Activated B cell treated with CpG ODN at 0.5 μM for 24 hours (primary cell): ENCODE measurements at regions of chr5 and their contacts with region 1.

Region 1: GRCh38 chr5:76601470-76601869 is 21.7 kb downstream of the F2RL2 start:
- DNase-seq: no peak
- ATAC-seq: peak; percentile 49
- H3K4me3 Mint-ChIP-seq: no peak overlapping the region
- H3K27ac Mint-ChIP-seq: no peak overlapping the region
- H3K4me1 Mint-ChIP-seq: no peaks in the 10 kb centered on the region
- H3K27me3 Mint-ChIP-seq: no peaks in the 10 kb centered on the region
- CTCF ChIP-seq: no peak

Region 2: GRCh38 chr5:76457674-76458485 is 143.6 kb before region 1 on chr5:
- CTCF ChIA-PET with region 1: no interaction called
- POLR2A ChIA-PET with region 1: no interaction called
- intact Hi-C with region 1: no loop called
- DNase-seq: no peak
- ATAC-seq: no peak
- H3K4me3 Mint-ChIP-seq: no peak overlapping the region
- H3K27ac Mint-ChIP-seq: no peak overlapping the region
- H3K4me1 Mint-ChIP-seq: no peaks in the 10 kb centered on the region
- H3K27me3 Mint-ChIP-seq: no peaks in the 10 kb centered on the region
- CTCF ChIP-seq: no peak

Region 3: DNA sequence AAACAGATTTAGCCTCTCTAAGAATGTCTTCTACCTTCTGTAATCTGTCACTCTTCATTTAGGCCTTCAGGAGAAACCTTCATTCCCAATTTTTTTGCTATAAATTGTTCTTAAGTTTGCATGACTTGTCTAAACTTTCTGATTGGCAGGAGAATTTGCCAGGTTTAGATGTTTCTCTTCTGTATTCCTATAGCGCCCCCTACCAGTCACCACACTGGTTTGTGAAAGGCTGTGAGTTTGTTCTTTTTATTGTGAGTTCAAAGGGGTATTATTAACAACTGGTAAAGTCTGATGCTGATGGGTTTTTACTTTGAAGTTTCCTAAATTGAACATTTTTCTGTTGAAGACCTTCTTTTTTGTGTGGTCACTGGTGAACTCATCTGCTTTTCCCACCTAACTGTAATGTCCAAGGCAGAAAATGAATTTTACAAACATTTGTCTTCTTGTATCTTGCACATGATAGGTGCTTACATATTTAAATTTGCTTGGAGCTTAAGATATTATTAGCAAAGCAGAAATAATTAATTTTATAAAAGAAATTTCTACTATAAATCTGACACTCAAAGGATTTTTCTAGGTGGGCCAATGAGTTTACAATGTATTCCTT is 40.1 kb after region 1 on chr5:
- CTCF ChIA-PET with region 1: interaction called, 4 read pairs
- POLR2A ChIA-PET with region 1: no interaction called
- intact Hi-C with region 1: loop called (anchors 1 kb)
- DNase-seq: no peak
- ATAC-seq: no peak
- H3K4me3 Mint-ChIP-seq: no peak overlapping the region
- H3K27ac Mint-ChIP-seq: no peak overlapping the region
- H3K4me1 Mint-ChIP-seq: peaks cover 14% of the 10 kb centered on the region
- H3K27me3 Mint-ChIP-seq: no peaks in the 10 kb centered on the region
- CTCF ChIP-seq: no peak

Region 4: DNA sequence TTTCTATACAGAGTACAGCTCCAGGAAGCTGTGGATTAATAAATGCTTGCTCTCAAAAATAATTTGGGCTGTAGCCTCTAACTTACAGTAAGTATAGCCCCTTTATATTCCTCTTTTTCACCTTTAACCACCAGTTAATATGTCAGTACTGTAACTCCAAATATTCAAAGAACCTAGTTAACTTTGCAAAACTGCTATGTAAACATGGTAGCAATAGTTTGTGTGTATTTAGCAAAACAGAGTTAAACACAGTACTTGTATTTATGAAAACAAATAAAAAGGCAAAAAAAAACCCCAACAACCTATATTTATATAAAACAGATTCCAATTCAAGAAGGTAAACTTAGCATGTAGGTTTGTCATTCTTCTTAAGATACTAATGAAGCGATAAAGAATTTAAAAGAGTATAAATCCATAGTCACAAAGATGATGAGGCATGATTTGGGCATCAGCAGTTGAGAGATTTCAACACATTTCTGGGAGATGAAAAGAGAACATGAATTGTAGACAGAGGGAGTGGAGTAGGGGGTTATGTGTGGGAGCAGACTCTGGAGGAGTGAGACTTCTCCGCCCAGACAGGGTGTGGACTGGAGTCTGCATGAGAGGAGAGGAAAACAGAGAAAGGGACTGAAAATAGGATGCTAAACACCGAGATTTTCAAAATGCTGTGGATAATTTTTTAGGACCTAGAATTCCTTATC is 170.4 kb after region 1 on chr5:
- CTCF ChIA-PET with region 1: interaction called, 62 read pairs
- POLR2A ChIA-PET with region 1: no interaction called
- intact Hi-C with region 1: loop called (anchors 1 kb)
- DNase-seq: no peak
- ATAC-seq: no peak
- H3K4me3 Mint-ChIP-seq: no peak overlapping the region
- H3K27ac Mint-ChIP-seq: no peak overlapping the region
- H3K4me1 Mint-ChIP-seq: peaks cover 2% of the 10 kb centered on the region
- H3K27me3 Mint-ChIP-seq: no peaks in the 10 kb centered on the region
- CTCF ChIP-seq: no peak

Region 5: DNA sequence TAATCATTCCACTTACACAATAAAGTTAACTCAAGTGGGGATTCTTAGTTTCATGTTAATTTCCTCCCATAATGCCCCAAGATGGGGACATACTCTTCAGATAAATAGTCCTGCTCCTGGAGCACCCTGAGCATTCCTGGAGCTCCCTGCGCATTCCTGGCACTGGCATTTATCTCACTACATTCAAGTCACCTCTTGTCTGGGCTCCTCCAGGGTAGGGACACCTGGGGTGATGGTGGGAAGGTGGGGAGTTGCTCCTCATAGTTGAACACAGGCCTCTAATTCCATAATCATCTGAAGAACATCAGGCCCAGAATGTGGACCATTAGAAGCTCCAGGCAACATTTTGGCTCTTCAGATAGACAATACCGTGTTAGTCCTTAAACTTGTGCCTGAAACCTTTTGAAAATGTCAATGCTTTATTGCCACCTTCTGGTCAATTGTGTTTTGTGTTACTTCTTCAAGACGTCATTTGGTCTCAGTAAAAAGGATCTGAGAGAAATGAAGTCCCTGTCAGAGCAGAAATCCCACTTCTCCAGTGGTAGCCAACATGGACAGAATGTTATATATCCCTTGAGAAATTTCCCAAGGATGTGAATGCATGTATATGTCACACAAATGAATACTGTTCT is 414.6 kb after region 1 on chr5:
- CTCF ChIA-PET with region 1: no interaction called
- POLR2A ChIA-PET with region 1: no interaction called
- intact Hi-C with region 1: loop called (anchors 2 kb)
- DNase-seq: no peak
- ATAC-seq: no peak
- H3K4me3 Mint-ChIP-seq: no peak overlapping the region
- H3K27ac Mint-ChIP-seq: no peak overlapping the region
- H3K4me1 Mint-ChIP-seq: no peaks in the 10 kb centered on the region
- H3K27me3 Mint-ChIP-seq: peaks cover 14% of the 10 kb centered on the region
- CTCF ChIP-seq: no peak